ENCODE measurements at regions of chr6 and their contacts with region 1.

Region 1: GRCh38 chr6:46419576-46420002 is 71.7 kb downstream of the RCAN2 start:
- DNase-seq: peak; percentile 55 to 70
- H3K4me3 ChIP-seq: no peak overlapping the region
- H3K27ac ChIP-seq: no peak overlapping the region
- H3K4me1 ChIP-seq: no peaks in the 10 kb centered on the region
- H3K27me3 ChIP-seq: no peaks in the 10 kb centered on the region
- CTCF ChIP-seq: peak; percentile 75 to 80 (median 78)
- POLR2A ChIP-seq: no peak

Region 2: GRCh38 chr6:46465294-46466165 is 45.9 kb after region 1 on chr6:
- intact Hi-C with region 1: no loop called
- DNase-seq: no peak
- H3K4me3 ChIP-seq: no peak overlapping the region
- H3K27ac ChIP-seq: no peak overlapping the region
- H3K4me1 ChIP-seq: peaks cover 0 to 3% of the 10 kb centered on the region in 2 donors
- H3K27me3 ChIP-seq: no peaks in the 10 kb centered on the region
- CTCF ChIP-seq: no peak
- POLR2A ChIP-seq: no peak

Region 3: GRCh38 chr6:46626228-46626909 is 206.8 kb after region 1 on chr6:
- intact Hi-C with region 1: loop called (anchors 5 kb)
- DNase-seq: no peak
- H3K4me3 ChIP-seq: no peak overlapping the region
- H3K27ac ChIP-seq: no peak overlapping the region
- H3K4me1 ChIP-seq: no peaks in the 10 kb centered on the region
- H3K27me3 ChIP-seq: no peaks in the 10 kb centered on the region
- CTCF ChIP-seq: peak; percentile 62 to 74 (median 65)
- POLR2A ChIP-seq: no peak

Region 4: GRCh38 chr6:47009566-47009965 is 590.0 kb after region 1 on chr6:
- intact Hi-C with region 1: no loop called
- DNase-seq: no peak
- H3K4me3 ChIP-seq: no peak overlapping the region
- H3K27ac ChIP-seq: no peak overlapping the region
- H3K4me1 ChIP-seq: no peaks in the 10 kb centered on the region
- H3K27me3 ChIP-seq: no peaks in the 10 kb centered on the region
- CTCF ChIP-seq: no peak
- POLR2A ChIP-seq: no peak

Measured in uterus (tissue), 4 donors.